CD4-positive, alpha-beta T cell (primary cell): ENCODE measurements at regions of chr10 and their contacts with region 1.

Region 1: DNA sequence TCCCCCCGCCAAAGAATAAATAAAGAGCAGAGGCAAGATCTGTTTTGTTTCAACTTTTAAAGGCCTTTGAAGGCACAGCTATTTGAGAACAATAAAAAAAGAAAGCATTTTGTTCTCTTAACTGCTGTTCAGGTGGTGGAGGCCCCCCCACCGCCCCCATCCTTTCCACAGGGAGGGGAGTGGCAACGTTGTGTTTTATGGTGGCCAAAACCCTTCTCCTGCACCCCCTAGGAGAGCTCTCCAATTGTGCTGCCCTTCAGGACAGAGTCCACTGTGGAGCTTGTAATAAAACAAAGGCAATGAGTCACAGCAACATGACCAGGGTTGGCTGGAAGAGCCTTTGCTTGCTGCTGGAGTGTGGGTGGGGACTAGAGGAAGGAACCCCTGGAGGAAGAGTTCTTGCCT is 987.9 kb downstream of the KCNMA1 start:
- DNase-seq: no peak
- ATAC-seq: no peak
- H3K4me3 ChIP-seq: no peak overlapping the region
- H3K4me3 Mint-ChIP-seq: no peak overlapping the region
- H3K27ac ChIP-seq: no peak overlapping the region
- H3K27ac Mint-ChIP-seq: no peak overlapping the region
- H3K4me1 ChIP-seq: no peaks in the 10 kb centered on the region
- H3K4me1 Mint-ChIP-seq: no peaks in the 10 kb centered on the region
- H3K27me3 ChIP-seq: no peaks in the 10 kb centered on the region
- H3K27me3 Mint-ChIP-seq: peaks cover 4% of the 10 kb centered on the region
- CTCF ChIP-seq: no peak

Region 2: DNA sequence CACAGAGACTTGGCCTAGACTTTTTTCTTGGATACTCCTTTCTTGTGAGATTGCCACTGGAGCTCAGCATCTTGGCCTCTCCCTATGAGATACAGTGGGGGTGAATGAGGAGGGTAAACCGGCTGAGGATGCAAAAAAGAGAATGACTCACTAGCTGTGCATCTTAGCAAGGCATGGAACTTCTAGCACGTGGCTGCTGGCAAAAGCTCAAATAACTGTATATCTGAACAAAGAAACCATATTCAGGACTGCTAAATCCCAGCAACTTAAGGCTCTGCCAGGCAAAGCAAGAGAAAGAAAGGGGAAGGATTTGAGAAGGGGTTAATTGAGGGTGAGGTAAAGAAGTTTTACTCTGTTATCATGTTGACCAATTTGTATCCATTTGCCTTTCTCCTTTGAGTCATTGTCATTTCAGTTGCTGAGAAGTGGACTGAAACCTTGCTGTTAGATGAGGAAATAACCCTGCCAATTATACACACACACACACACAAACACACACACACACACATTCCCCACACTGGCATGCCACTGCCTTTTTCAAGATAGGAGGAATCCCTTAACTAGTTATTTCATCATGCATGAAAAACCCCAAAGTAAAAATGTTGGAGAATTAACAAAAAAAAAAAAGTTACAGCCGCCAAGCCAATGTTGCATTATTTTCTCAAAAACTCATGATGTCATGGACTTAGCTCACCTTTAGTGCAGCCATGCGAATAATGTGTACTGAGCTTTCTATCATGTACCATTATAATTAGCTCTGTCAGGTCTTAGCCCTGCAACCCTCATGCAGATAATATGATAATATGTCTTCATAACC is 221.0 kb before region 1 on chr10:
- CTCF ChIA-PET with region 1: no interaction called
- POLR2A ChIA-PET with region 1: no interaction called
- intact Hi-C with region 1: no loop called
- DNase-seq: no peak
- ATAC-seq: no peak
- H3K4me3 ChIP-seq: no peak overlapping the region
- H3K4me3 Mint-ChIP-seq: no peak overlapping the region
- H3K27ac ChIP-seq: no peak overlapping the region
- H3K27ac Mint-ChIP-seq: no peak overlapping the region
- H3K4me1 ChIP-seq: no peaks in the 10 kb centered on the region
- H3K4me1 Mint-ChIP-seq: no peaks in the 10 kb centered on the region
- H3K27me3 ChIP-seq: no peaks in the 10 kb centered on the region
- H3K27me3 Mint-ChIP-seq: no peaks in the 10 kb centered on the region
- CTCF ChIP-seq: no peak

Region 3: DNA sequence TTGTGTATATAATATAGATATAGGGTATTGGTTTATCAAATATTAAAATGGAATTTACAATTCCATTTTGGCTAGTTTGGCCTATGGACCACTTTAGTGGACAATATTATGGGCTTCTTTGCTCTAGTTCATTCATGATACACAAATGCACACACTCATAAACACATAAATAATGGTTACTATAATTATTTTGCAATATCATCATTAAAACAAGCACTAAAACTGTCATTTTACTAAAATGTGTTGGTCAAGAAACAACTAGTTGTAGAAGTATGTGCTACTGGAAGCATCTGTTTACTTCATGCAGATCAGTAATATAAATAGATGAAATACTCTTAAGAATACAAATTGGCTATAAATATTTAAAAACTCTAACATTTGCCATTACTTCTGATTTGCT is 86.4 kb before region 1 on chr10:
- CTCF ChIA-PET with region 1: no interaction called
- POLR2A ChIA-PET with region 1: no interaction called
- intact Hi-C with region 1: no loop called
- DNase-seq: no peak
- ATAC-seq: no peak
- H3K4me3 ChIP-seq: no peak overlapping the region
- H3K4me3 Mint-ChIP-seq: no peak overlapping the region
- H3K27ac ChIP-seq: no peak overlapping the region
- H3K27ac Mint-ChIP-seq: no peak overlapping the region
- H3K4me1 ChIP-seq: no peaks in the 10 kb centered on the region
- H3K4me1 Mint-ChIP-seq: no peaks in the 10 kb centered on the region
- H3K27me3 ChIP-seq: no peaks in the 10 kb centered on the region
- H3K27me3 Mint-ChIP-seq: no peaks in the 10 kb centered on the region
- CTCF ChIP-seq: no peak

Region 4: GRCh38 chr10:76723844-76724243 is 74.1 kb after region 1 on chr10:
- CTCF ChIA-PET with region 1: no interaction called
- POLR2A ChIA-PET with region 1: no interaction called
- intact Hi-C with region 1: loop called in 1 of 2 experiments (anchors 10 kb)
- DNase-seq: no peak
- ATAC-seq: no peak
- H3K4me3 ChIP-seq: no peak overlapping the region
- H3K4me3 Mint-ChIP-seq: no peak overlapping the region
- H3K27ac ChIP-seq: no peak overlapping the region
- H3K27ac Mint-ChIP-seq: no peak overlapping the region
- H3K4me1 ChIP-seq: no peaks in the 10 kb centered on the region
- H3K4me1 Mint-ChIP-seq: no peaks in the 10 kb centered on the region
- H3K27me3 ChIP-seq: no peaks in the 10 kb centered on the region
- H3K27me3 Mint-ChIP-seq: no peaks in the 10 kb centered on the region
- CTCF ChIP-seq: no peak

Region 5: GRCh38 chr10:77049896-77050295 is 400.2 kb after region 1 on chr10:
- CTCF ChIA-PET with region 1: no interaction called
- POLR2A ChIA-PET with region 1: no interaction called
- intact Hi-C with region 1: no loop called
- DNase-seq: no peak
- ATAC-seq: no peak
- H3K4me3 ChIP-seq: no peak overlapping the region
- H3K4me3 Mint-ChIP-seq: no peak overlapping the region
- H3K27ac ChIP-seq: no peak overlapping the region
- H3K27ac Mint-ChIP-seq: no peak overlapping the region
- H3K4me1 ChIP-seq: no peaks in the 10 kb centered on the region
- H3K4me1 Mint-ChIP-seq: peaks cover 10% of the 10 kb centered on the region
- H3K27me3 ChIP-seq: no peaks in the 10 kb centered on the region
- H3K27me3 Mint-ChIP-seq: peaks cover 8% of the 10 kb centered on the region
- CTCF ChIP-seq: no peak